A673 (cell line): ENCODE measurements at regions of chr1 and their contacts with region 1.

Region 1: GRCh38 chr1:16206547-16207317 is 5.7 kb downstream of the ARHGEF19 start:
- DNase-seq: peak; percentile 99
- H3K4me3 ChIP-seq: peak overlapping the region; percentile 56
- H3K27ac ChIP-seq: peak overlapping the region; percentile 81
- H3K4me1 ChIP-seq: peaks cover 9% of the 10 kb centered on the region
- H3K27me3 ChIP-seq: no peaks in the 10 kb centered on the region
- CTCF ChIP-seq: no peak

Region 2: DNA sequence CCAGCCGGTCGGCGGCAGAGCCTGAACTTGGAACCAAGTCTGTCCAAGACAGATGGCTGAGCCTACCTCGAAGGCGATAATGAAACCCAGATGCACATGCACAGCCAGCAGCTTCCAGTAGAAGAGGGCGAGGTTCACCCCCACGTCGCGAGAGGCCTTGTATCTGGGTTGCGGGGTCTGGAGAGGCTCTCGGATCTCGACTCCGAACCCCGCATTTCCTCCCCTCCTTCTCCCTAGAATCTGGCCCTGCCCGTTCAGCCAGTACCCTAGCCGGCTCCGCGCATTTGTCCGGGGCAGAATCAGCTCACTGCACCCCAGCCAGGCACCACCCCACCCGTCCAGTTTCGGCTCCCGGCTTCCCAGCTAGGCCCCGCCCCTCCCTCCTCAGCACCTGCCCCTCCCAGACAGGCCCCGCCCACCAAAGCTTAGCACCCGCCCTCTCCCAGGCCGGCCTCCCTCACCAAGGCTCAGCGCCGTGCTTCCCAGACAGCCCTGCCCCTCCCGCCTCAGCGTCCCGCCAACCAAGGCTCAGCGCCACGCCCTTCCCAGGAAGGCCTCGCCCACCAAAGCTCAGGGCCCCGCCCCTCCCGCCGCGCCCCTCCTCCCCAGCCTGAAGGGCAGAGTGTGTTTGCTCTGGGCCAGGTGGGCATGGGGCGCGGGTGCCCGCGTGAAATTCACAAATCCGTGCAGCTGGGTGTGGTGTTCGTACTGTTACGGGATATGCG is 10.5 kb after region 1 on chr1:
- CTCF ChIA-PET with region 1: interaction called, 3 read pairs
- POLR2A ChIA-PET with region 1: interaction called, 12 read pairs
- intact Hi-C with region 1: no loop called
- DNase-seq: peak; percentile 97
- H3K4me3 ChIP-seq: peak overlapping the region; percentile 32
- H3K27ac ChIP-seq: no peak overlapping the region
- H3K4me1 ChIP-seq: peaks cover 5% of the 10 kb centered on the region
- H3K27me3 ChIP-seq: no peaks in the 10 kb centered on the region
- CTCF ChIP-seq: no peak